ENCODE measurements at regions of chr10 and their contacts with region 1.

Region 1: DNA sequence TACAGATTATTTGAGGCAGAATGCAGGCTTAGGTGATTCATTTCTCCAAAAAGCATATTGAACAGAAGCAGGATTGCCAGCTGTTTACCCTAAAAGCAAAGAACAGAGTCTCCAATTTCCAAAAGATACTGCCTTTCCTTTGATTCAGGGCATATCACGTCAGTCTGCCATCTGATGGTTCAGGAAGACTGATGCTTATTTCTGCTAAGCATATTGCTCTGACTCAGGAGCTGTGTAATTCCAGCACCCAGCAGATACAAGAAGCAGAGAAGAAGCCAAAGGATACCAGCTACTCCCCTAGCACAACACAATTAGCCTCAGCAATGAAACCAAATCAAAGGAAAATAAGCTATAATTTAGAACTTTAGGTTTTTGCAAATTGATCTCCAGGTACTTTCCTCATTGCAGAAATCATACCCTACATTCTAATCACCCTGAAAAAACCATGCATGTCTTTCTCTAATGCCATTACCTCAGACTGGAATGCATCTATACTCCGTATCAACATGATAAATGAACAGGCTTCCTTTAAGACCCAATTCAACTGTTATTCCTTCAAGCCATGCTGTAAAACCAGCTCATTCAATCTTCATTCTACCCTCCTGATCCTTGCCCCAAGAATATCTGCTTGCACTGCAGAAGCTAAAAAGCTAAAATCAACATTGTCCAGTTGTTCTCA is 55.1 kb downstream of the ABI1 start:
- DNase-seq: no peak
- H3K4me3 ChIP-seq: no peak overlapping the region
- H3K27ac ChIP-seq: no peak overlapping the region
- H3K4me1 ChIP-seq: no peaks in the 10 kb centered on the region
- H3K27me3 ChIP-seq: no peaks in the 10 kb centered on the region
- CTCF ChIP-seq: no peak
- POLR2A ChIP-seq: no peak

Region 2: DNA sequence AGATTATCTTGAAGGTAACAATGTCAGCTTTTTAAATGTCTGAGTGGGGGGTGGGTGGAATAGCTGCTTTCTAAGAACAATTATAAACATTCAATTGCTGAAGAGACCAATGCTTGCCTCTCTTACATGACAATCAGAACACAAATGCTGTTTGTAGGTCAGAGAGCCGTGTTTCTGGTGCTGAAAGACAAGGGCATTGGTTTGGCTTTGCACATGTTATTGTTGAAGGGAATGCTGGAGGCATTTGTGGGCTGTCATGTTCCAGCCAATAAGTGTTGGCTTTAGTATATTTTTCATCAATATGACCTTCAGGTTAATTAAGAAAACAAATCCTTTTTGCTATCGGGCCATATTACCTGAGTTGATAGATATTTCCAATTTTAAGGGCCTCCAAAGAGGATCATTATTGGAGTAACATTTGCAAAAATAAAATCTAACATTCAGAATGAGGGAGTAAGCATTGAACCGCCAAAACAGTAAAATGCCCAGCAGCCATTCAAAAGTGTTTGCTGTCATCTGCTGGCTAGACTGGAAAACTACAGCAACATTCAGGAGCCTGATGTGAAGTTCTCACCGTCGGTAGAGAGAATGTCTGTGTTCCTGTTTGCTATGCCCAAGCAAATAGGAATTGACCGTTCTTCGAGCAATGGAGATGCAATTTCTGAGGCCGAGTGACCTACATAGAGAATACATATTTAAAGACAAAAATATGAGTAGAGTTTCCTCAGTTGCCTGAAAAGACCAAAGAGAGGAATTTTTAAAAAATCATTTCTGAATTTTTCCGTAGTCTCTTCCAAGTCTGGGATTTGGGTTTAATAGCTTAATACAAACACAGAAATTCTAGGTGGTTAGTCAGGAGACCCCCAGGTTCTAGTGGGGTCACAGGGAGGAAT is 248.7 kb before region 1 on chr10:
- intact Hi-C with region 1: loop called (anchors 5 kb)
- DNase-seq: no peak
- H3K4me3 ChIP-seq: no peak overlapping the region
- H3K27ac ChIP-seq: no peak overlapping the region
- H3K4me1 ChIP-seq: no peaks in the 10 kb centered on the region
- H3K27me3 ChIP-seq: peaks cover 0 to 3% of the 10 kb centered on the region in 2 donors
- CTCF ChIP-seq: peak; percentile 27 to 56 (median 56)
- POLR2A ChIP-seq: no peak

Region 3: GRCh38 chr10:27019827-27020226 is 214.1 kb after region 1 on chr10:
- intact Hi-C with region 1: no loop called
- DNase-seq: no peak
- H3K4me3 ChIP-seq: no peak overlapping the region
- H3K27ac ChIP-seq: no peak overlapping the region
- H3K4me1 ChIP-seq: no peaks in the 10 kb centered on the region
- H3K27me3 ChIP-seq: no peaks in the 10 kb centered on the region
- CTCF ChIP-seq: no peak
- POLR2A ChIP-seq: no peak

Measured in breast epithelium (tissue), 4 donors.